Right lobe of liver (tissue), 6 donors: ENCODE measurements at regions of chr9 and their contacts with region 1.

Region 1: GRCh38 chr9:35882263-35882848 is 12.2 kb upstream of the OR13J1 start:
- DNase-seq: peak; percentile 85 to 87 (median 86)
- ATAC-seq: peak; percentile 98 to 100 (median 99)
- H3K4me3 ChIP-seq: no peak overlapping the region
- H3K27ac ChIP-seq: no peak overlapping the region
- H3K4me1 ChIP-seq: no peaks in the 10 kb centered on the region
- H3K27me3 ChIP-seq: no peaks in the 10 kb centered on the region
- CTCF ChIP-seq: peak; percentile 90 to 98 (median 98)
- POLR2A ChIP-seq: no peak

Region 2: DNA sequence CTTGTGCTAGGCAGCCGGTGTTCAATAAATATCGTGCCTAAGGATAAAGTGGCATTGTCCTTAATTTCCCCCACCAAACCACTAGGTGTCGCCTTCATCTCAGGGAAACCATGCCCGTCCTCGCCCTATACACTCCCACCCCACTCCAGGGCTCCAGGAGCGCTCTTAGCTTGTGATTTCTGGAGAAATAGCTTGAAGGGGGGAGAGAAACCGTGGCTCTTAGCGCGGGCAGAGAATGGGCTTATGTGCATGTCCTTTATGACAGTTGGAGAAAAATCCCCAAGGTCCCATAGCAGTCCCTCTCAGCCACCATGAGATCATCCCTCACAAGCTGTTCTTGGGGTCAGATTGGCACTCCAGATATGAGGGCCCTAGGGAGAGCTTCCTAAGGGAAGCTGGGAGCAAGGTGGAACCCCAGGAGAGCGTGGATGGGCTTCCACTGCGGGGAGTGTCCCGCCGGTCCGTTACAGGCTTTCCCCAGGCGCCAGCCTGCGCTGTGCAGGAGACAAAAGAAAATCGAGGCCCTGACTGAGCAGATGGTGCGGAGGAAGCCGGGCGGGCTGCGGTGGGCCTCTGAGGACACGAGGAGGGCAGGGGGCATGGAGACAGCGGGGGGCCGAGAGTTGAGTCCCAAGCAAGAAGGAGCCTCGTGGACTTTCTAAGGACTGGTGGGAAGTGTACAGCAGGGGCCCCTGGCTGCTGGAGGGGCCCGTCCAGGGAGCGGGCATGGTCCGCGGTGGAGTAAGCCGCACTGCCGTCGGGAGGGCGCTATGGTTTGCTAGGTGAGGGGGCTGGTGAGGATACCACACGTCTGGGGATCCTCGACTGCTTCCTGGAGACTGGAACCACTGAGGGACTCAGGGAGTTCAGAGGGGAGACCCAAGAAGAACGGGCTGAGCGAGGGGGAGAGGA is 91.7 kb before region 1 on chr9:
- intact Hi-C with region 1: loop called in 1 of 2 experiments (anchors 10 kb)
- DNase-seq: peak in 2 of 3 donors; percentile 45 to 75
- ATAC-seq: peak; percentile 85 to 90 (median 88)
- H3K4me3 ChIP-seq: peak overlapping the region in 2 of 3 donors; percentile 58 to 62
- H3K27ac ChIP-seq: peak overlapping the region in 2 of 3 donors; percentile 14 to 27
- H3K4me1 ChIP-seq: peaks cover 0 to 17% (median 0%) of the 10 kb centered on the region in 4 donors
- H3K27me3 ChIP-seq: no peaks in the 10 kb centered on the region
- CTCF ChIP-seq: peak; percentile 73 to 88 (median 80)
- POLR2A ChIP-seq: no peak

Region 3: GRCh38 chr9:35829084-35829763 is 53.1 kb before region 1 on chr9 and contains the start of gene TMEM8B:
- intact Hi-C with region 1: loop called in 1 of 2 experiments (anchors 10 kb)
- DNase-seq: peak; percentile 96 to 97 (median 97)
- ATAC-seq: peak; percentile 84 to 93 (median 90)
- H3K4me3 ChIP-seq: peak within 1 kb of the TSS; percentile 62 to 88 (median 75)
- H3K27ac ChIP-seq: peak within 1 kb of the TSS; percentile 81 to 87 (median 82)
- H3K4me1 ChIP-seq: peaks cover 0 to 25% (median 1%) of the 10 kb centered on the region in 4 donors
- H3K27me3 ChIP-seq: no peaks in the 10 kb centered on the region
- CTCF ChIP-seq: no peak
- POLR2A ChIP-seq: no peak
- total RNA-seq, gene TMEM8B: 1.7 to 4.7 (median 3.5) TPM

Region 4: DNA sequence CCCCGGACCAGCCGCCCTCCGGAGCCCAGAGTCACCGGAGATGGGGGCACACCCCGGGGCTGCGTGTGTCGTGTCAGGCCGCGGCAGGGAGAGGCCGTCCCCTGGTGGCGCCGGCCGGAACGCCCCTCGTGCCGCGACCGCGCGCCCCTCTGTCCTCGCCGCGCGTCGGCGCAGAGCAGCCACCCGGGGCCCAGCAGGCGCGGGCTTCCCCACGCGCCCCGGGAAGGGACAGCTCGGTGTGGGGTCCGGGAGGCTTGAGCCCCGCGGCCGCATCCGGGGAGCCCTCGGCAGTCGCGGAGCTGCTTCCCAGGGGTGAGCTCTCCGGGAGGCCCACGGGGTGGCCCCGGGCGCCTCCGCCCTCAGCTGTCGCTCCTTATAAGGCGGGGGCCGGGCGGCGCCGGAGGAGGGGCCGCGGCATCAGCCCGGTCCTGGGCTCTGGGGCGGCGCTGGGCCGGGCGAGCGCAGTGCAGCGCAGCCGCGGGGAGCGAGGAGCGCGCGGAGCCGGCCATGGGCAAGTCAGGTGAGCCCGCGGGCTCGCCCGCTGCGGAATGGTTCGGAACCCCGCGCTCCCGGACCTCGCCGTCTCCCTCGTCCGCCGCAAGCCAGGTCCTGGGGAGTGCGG is 254.0 kb after region 1 on chr9 and contains the start of gene GLIPR2:
- intact Hi-C with region 1: no loop called
- DNase-seq: peak; percentile 71 to 83 (median 81)
- ATAC-seq: peak; percentile 90 to 95 (median 93)
- H3K4me3 ChIP-seq: peak within 1 kb of the TSS; percentile 55 to 68 (median 57)
- H3K27ac ChIP-seq: peak within 1 kb of the TSS; percentile 26 to 41 (median 35)
- H3K4me1 ChIP-seq: peaks cover 0 to 9% (median 0%) of the 10 kb centered on the region in 4 donors
- H3K27me3 ChIP-seq: peaks cover 0 to 10% of the 10 kb centered on the region in 2 donors
- CTCF ChIP-seq: peak in 2 of 4 donors; percentile 12 to 18
- POLR2A ChIP-seq: peak; percentile 67
- total RNA-seq, gene GLIPR2: 1.2 to 3.9 (median 2.5) TPM

Region 5: DNA sequence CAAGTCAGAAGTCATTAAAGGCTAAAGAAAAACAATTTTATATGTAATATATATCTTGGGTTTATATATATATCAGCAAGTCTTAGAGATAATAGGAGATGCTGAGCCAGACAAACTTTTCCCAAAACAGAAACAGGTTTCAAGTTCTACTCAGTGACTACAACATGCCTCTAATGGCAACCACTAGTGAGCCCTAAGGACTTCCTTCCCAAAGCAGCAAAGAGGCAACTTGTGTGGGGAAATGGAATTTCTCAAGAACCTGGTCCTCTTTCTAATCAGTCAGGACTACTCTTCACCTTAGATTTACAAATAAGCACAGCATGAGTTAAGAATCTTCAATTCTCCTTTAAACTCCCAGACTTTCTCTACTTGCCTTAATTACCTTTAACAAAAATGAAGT is 500.1 kb after region 1 on chr9:
- intact Hi-C with region 1: no loop called
- DNase-seq: no peak
- ATAC-seq: no peak
- H3K4me3 ChIP-seq: no peak overlapping the region
- H3K27ac ChIP-seq: no peak overlapping the region
- H3K4me1 ChIP-seq: no peaks in the 10 kb centered on the region
- H3K27me3 ChIP-seq: no peaks in the 10 kb centered on the region
- CTCF ChIP-seq: no peak
- POLR2A ChIP-seq: no peak